GM10248 (cell line): ENCODE measurements at regions of chr16 and their contacts with region 1.

Region 1: DNA sequence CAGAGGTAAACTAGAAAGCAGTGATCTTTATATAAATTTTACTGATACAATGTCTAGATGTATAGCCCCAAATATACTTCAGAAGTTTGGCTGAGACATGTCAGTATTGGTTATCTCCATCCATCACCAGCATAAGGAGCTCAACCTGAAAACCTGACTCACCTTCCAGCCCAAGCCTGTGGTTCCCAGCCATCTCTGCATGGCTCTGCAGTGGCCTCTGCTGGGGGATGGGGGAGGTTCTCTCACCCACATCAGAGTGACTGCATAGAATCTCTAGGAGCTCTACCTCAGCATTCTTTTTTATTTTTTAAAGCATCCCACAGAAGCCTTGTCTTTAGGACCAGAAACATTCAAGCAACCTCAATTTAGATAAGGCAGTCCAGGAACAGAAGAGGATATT is 27.3 kb downstream of the USP7 start:
- DNase-seq: peak; percentile 73
- CTCF ChIP-seq: peak; percentile 71

Region 2: DNA sequence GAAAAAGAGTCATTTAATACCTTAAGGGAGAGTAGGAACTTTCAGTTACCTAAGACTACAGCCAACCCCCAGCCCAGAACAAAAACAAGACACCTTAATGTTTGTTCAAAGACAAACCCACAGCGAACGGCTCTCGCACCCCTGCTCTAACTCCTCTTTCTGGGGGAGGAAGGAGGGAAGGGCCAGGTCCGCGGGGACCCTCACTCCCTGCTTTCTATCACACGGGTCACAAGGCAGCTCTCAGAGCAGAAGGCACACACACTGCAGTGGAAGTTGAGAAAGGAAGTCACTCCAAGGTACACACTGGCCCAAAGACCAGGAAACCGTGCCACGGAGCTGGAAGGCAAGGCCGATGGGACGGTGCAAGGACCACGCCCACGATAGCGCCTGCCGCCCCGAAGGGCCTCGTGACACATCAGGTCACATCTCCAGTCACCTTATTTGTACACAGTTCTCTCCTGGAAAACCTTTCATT is 44.3 kb before region 1 on chr16:
- CTCF ChIA-PET with region 1: interaction called, 30 read pairs
- POLR2A ChIA-PET with region 1: no interaction called
- DNase-seq: peak; percentile 45
- CTCF ChIP-seq: no peak

Region 3: GRCh38 chr16:8899709-8900317 is 36.6 kb before region 1 on chr16:
- CTCF ChIA-PET with region 1: interaction called, 17 read pairs
- POLR2A ChIA-PET with region 1: no interaction called
- DNase-seq: no peak
- CTCF ChIP-seq: no peak

Region 4: DNA sequence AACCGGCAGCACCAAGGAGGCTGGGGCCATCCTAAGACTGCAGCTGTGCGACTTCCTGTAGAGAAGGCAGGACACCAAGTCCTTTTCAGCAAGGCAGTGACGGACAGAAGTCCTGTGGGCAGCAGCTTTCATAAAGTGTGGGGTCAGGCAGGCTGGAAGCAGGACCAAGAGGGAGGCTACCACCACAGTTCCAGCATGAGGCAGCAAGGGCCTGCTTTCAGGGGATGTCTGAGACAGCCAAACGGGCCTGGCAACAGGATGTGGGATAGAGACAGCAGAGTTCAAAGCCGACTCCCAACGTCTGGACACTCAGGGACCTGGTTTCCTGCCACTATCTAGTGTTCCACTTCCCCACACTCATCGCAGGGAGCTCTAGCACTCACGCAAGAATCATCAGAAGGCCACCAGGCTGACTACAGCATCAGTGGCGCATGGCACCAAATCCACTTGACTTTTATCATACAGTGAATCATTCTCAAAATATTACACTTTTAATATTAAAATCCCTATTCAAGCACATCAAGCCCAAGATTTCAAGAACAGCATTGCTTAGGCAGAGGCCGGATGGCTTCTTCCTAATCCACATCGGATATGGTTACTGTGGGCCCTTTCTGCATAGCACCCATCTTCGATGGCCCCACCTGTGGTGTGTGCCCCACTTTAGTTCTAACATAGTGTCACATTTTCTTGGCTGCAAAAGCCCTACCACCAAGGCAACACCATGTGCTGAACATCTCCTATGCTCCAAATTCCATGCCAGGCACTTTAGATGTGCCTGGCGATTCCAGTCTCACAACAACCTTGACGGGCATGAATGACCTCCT is 22.1 kb after region 1 on chr16:
- CTCF ChIA-PET with region 1: interaction called, 21 read pairs
- POLR2A ChIA-PET with region 1: no interaction called
- DNase-seq: no peak
- CTCF ChIP-seq: no peak

Region 5: DNA sequence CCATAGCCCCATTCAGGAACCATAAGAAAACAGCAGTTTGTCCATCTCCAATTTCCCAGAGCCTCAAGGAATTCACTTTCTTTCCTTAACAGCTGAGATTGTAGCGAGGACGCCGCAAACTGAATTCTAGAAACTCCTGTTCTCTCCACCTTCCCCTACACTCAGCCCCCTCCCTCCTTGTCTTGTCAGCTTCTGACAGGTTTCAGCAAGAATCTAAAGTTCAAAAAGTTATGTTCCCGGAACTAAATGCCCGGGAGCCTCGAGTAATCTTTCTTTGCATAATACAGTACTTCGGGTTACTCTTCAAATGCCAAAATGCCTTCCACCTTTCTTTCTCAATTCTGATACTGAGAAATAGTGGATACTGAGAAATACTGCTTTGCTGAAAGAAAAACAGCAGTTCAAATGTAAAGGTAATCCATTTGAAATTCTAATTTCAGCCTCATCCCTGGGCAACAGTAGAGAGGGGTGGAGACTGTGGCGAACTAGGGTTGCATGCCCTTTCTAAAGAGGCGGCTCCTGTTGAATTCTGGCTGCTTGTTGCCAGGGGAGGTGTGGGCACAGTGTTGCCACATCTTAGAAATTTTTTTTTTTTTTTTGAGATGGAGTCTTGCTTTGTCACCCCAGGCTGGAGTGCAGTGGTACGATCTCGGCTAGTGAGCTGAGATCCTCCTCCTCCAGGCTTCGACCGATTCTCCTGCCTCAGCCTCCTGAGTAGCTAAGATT is 90.8 kb after region 1 on chr16:
- CTCF ChIA-PET with region 1: no interaction called
- POLR2A ChIA-PET with region 1: no interaction called
- DNase-seq: no peak
- CTCF ChIP-seq: no peak

Region 6: GRCh38 chr16:9077091-9077809 is 140.8 kb after region 1 on chr16:
- CTCF ChIA-PET with region 1: interaction called, 12 read pairs
- POLR2A ChIA-PET with region 1: no interaction called
- DNase-seq: no peak
- CTCF ChIP-seq: no peak